Caco-2 (cell line): ENCODE measurements at regions of chr6 and their contacts with region 1.

Region 1: GRCh38 chr6:160071800-160072690 is 49.6 kb upstream of the SLC22A1 start:
- DNase-seq: peak in 1 of 2 experiments; percentile 9
- H3K4me3 ChIP-seq: no peak overlapping the region
- H3K4me3 Mint-ChIP-seq: no peak overlapping the region
- H3K27ac Mint-ChIP-seq: no peak overlapping the region
- H3K4me1 ChIP-seq: no peaks in the 10 kb centered on the region
- H3K4me1 Mint-ChIP-seq: no peaks in the 10 kb centered on the region
- H3K27me3 ChIP-seq: no peaks in the 10 kb centered on the region
- H3K27me3 Mint-ChIP-seq: no peaks in the 10 kb centered on the region
- CTCF ChIP-seq: no peak

Region 2: DNA sequence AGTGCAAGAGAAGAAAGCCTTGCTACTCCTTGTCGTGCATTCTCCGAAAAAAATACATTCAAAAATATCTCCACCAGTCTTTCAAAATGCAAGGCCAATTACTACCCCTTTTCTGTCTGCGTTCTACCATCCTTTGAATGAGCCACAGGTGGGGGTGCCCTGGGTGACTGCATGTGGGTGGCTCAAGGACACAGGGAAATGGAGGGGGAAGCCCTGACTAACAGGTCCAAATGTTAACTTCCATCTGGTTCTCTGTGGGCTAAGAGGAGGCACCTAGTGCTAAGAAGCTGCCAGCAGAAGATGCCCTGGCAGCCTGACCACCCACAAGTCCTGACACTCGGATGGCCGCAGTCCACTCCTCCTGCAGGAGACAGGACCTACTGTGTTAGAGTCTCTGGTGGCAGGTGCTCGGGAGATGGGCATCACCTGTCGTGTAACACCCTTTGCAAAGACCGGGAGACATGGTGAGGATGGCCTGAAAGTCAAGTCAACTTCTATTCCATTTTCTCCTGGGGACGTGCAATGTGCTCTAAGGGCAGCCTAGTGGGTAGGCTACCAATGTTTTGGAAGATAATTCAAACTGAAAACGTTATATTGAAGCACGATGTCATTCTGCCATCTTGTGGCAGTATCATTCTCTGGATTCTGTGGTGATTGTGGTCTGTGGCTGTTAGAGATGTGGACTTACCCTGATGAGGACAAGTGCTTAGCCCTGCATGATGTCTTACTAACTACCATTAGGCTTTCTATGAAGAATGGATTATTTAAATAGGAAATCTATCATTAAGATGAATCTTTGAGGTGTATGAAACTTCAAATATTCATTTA is 130.5 kb before region 1 on chr6:
- CTCF ChIA-PET with region 1: no interaction called
- POLR2A ChIA-PET with region 1: no interaction called
- intact Hi-C with region 1: no loop called
- DNase-seq: peak in 1 of 2 experiments; percentile 27
- H3K4me3 ChIP-seq: no peak overlapping the region
- H3K4me3 Mint-ChIP-seq: no peak overlapping the region
- H3K27ac Mint-ChIP-seq: no peak overlapping the region
- H3K4me1 ChIP-seq: no peaks in the 10 kb centered on the region
- H3K4me1 Mint-ChIP-seq: peaks cover 6% of the 10 kb centered on the region
- H3K27me3 ChIP-seq: no peaks in the 10 kb centered on the region
- H3K27me3 Mint-ChIP-seq: peaks cover 12% of the 10 kb centered on the region
- CTCF ChIP-seq: peak; percentile 35 to 39

Region 3: DNA sequence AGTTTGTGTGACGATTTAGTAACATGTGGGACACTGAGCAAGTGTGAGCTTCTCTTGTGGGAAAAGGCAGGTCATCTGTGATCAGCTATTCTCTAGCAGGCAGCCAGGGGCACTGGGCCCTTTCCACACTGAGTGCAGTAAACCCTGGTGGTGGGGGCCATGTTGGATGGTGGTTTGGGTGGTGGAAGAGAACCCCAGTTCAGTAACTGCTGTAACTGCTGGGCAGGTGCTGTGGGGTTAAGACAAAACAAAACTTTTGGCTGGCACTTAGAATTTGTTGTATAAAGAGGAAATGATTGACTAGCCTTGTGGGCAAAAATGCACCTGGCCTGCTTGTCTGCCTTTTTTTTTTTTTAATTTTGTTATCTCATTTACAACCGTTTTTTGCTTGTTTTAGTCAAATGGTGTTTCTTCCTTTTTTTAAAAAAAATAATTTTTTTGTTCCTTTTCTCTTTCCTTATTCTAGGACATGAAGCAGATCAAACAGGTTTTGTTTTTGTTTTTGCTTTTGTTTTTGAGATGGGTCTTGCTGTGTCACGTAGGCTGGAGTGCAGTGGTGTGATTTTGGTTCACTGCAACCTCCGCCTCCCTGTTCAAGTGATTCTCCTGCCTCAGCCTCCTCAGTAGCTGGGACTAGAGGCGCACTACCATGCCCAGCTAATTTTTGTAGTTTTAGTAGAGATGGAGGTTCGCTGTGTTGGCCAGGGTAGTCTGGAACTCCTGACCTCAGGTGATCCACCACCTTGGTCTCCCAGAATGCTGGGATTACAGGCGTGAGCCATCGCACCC is 43.4 kb before region 1 on chr6:
- CTCF ChIA-PET with region 1: no interaction called
- POLR2A ChIA-PET with region 1: no interaction called
- intact Hi-C with region 1: loop called (anchors 1 kb)
- DNase-seq: no peak
- H3K4me3 ChIP-seq: no peak overlapping the region
- H3K4me3 Mint-ChIP-seq: no peak overlapping the region
- H3K27ac Mint-ChIP-seq: peak overlapping the region; percentile 20
- H3K4me1 ChIP-seq: no peaks in the 10 kb centered on the region
- H3K4me1 Mint-ChIP-seq: peaks cover 10% of the 10 kb centered on the region
- H3K27me3 ChIP-seq: no peaks in the 10 kb centered on the region
- H3K27me3 Mint-ChIP-seq: no peaks in the 10 kb centered on the region
- CTCF ChIP-seq: no peak